Activated T-helper 1 cell treated with anti-CD3 and anti-CD28 coated beads, Interleukin-12 subunit alpha, Interleukin-12 subunit beta, Interleukin-2, Interleukin-4 antibody, amounts not matched to agents 30 ng/mL and 10 ng/mL and 1 ng/mL, durations not matched to agents 14 hours and 24 hours and 36 hours (primary cell): ENCODE measurements at regions of chr12 and their contacts with region 1.

Region 1: DNA sequence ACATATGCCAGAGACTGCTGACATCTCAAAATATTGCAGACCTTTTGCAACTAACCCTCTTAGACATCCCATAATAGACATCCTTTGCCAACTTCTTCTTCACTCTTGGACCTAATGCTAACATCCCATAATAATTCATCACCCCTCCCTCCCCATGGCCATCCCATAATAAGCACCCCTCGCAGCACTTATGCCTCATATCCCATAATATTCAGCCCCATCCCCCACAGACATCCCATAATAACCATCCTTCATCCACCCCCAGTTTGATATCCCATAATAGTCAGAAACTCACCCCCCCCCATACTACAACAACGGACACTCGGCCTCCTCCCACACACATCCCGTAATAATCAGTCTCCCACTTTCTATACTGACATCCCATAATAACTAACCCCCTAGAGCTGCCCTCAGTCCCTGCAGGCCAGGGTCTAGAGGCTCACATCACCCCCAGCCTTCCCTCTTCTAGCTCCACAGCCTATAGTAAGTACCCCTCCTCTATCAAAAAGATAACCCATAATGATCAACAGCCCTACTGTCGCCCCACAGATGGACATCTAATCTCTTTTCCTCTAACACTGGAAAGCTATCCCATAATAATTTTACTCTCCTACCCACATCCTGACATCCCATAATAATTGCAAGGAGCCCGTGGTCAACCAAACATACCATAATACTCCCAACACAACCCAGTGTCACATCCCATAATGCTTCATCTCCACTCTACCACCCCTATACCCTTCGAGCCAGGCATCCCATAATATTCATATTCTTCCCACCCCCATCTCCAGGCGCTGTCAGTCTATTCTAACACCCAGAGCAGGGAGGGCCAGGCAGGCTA is 792 bp upstream of the CHD4 start:
- DNase-seq: peak; percentile 51
- H3K4me3 Mint-ChIP-seq: no peak overlapping the region
- H3K27ac Mint-ChIP-seq: no peak overlapping the region
- H3K4me1 Mint-ChIP-seq: peaks cover 47% of the 10 kb centered on the region
- H3K27me3 Mint-ChIP-seq: no peaks in the 10 kb centered on the region

Region 2: GRCh38 chr12:6335451-6336078 is 272.4 kb before region 1 on chr12:
- intact Hi-C with region 1: loop called (anchors 5 kb)
- DNase-seq: peak; percentile 80
- H3K4me3 Mint-ChIP-seq: no peak overlapping the region
- H3K27ac Mint-ChIP-seq: no peak overlapping the region
- H3K4me1 Mint-ChIP-seq: peaks cover 37% of the 10 kb centered on the region
- H3K27me3 Mint-ChIP-seq: no peaks in the 10 kb centered on the region

Region 3: GRCh38 chr12:6493497-6494257 is 114.3 kb before region 1 on chr12 and contains the start of gene NCAPD2:
- intact Hi-C with region 1: loop called (anchors 2 kb)
- DNase-seq: peak; percentile 96
- H3K4me3 Mint-ChIP-seq: peak within 1 kb of the TSS; percentile 97
- H3K27ac Mint-ChIP-seq: peak within 1 kb of the TSS; percentile 97
- H3K4me1 Mint-ChIP-seq: peaks cover 33% of the 10 kb centered on the region
- H3K27me3 Mint-ChIP-seq: peaks cover 3% of the 10 kb centered on the region
- total RNA-seq, gene NCAPD2: 91.6 and 93.4 TPM in 2 replicates

Region 4: DNA sequence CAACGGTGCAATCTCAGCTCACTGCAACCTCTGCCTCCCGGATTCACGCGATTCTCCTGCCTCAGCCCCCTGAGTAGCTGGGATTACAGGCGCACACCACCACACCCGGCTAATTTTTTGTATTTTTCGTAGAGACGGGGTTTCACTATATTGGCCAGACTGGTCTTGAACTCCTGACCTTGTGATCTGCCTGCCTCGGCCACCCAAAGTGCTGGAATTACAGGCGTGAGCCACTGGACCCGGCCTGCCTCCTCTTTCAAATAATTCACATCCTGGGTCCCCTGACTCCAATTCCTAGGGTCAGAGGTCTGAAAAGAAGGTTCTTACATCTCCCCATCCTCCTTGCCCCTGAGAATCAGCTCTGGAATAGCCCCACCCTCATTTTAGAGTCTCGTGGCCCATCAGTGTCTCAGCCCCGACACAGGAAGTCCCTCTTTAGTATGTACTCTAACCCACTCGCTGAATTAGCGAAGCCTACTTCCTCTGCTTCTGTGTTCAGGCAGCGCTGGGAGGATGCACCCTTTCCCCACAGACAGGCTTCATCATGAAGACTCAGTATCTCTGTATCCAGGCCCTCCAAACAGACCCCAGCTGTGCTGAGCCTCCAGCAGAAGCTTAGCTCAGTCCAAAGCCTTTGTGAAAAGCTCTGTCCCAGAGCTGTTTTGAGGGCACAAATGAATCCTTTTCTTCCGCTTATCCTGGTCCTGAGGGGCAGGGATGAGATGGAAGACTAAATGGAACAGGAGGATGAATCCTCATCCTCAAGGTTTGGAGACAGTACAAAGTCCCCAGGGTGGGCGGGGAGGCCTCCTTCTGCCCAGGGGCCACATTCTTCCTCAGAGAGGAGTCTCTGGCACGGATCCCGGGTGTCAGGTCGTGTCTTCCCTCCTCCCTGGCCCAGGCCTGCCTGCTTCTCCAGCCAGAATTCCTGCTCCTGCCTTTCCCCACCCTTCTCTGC is 24.3 kb after region 1 on chr12:
- intact Hi-C with region 1: loop called (anchors 2 kb)
- DNase-seq: peak; percentile 46
- H3K4me3 Mint-ChIP-seq: peak overlapping the region; percentile 67
- H3K27ac Mint-ChIP-seq: peak overlapping the region; percentile 96
- H3K4me1 Mint-ChIP-seq: peaks cover 60% of the 10 kb centered on the region
- H3K27me3 Mint-ChIP-seq: no peaks in the 10 kb centered on the region

Region 5: GRCh38 chr12:6752921-6753771 is 145.2 kb after region 1 on chr12 and contains the start of gene MLF2:
- intact Hi-C with region 1: loop called (anchors 1 kb)
- DNase-seq: peak; percentile 97
- H3K4me3 Mint-ChIP-seq: peak within 1 kb of the TSS; percentile 94
- H3K27ac Mint-ChIP-seq: peak within 1 kb of the TSS; percentile 96
- H3K4me1 Mint-ChIP-seq: peaks cover 32% of the 10 kb centered on the region
- H3K27me3 Mint-ChIP-seq: no peaks in the 10 kb centered on the region
- total RNA-seq, gene MLF2: 159 and 161 TPM in 2 replicates

Region 6: DNA sequence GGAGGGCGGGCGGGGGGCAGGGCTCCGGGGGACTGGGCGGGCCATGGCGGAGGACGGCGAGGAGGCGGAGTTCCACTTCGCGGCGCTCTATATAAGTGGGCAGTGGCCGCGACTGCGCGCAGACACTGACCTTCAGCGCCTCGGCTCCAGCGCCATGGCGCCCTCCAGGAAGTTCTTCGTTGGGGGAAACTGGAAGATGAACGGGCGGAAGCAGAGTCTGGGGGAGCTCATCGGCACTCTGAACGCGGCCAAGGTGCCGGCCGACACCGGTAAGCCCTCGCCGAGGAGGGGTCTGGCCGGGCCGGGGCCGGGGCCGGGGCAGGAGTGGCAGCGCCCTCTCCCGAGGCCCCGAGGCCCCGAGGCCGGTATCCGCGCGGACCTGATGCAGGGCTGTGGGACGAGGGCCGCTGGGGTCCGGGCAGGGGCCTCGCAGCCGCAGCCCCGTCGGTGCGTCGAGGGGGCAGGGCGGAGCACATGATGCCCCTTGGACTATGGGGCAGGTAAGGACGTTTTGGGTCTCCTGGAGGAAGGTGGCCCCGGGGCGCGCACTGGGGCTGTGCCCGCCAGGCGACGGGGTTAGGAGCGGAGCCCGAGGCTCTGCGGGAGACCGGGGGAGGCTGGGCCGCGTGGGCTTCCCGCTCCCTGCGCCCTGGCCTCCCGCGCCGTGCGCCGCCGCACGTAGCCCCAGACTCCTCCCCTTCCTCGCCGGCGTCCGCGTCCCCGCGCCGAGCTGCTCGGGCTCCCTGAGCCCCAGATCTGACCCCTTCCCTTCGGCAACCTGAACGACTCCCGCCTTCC is 259.6 kb after region 1 on chr12 and contains the start of gene TPI1:
- intact Hi-C with region 1: loop called (anchors 5 kb)
- DNase-seq: peak; percentile 75
- H3K4me3 Mint-ChIP-seq: peak within 1 kb of the TSS; percentile 96
- H3K27ac Mint-ChIP-seq: peak within 1 kb of the TSS; percentile 99
- H3K4me1 Mint-ChIP-seq: peaks cover 53% of the 10 kb centered on the region
- H3K27me3 Mint-ChIP-seq: no peaks in the 10 kb centered on the region
- total RNA-seq, gene TPI1: 1,427 and 1,438 TPM in 2 replicates

Region 7: GRCh38 chr12:7108796-7109571 is 501.0 kb after region 1 on chr12 and contains the start of gene C1RL:
- intact Hi-C with region 1: loop called (anchors 10 kb)
- DNase-seq: peak; percentile 71
- H3K4me3 Mint-ChIP-seq: peak within 1 kb of the TSS; percentile 94
- H3K27ac Mint-ChIP-seq: peak within 1 kb of the TSS; percentile 91
- H3K4me1 Mint-ChIP-seq: peaks cover 55% of the 10 kb centered on the region
- H3K27me3 Mint-ChIP-seq: no peaks in the 10 kb centered on the region
- total RNA-seq, gene C1RL: 21.5 and 21.8 TPM in 2 replicates